ENCODE measurements at regions of chr5 and their contacts with region 1.

Region 1: DNA sequence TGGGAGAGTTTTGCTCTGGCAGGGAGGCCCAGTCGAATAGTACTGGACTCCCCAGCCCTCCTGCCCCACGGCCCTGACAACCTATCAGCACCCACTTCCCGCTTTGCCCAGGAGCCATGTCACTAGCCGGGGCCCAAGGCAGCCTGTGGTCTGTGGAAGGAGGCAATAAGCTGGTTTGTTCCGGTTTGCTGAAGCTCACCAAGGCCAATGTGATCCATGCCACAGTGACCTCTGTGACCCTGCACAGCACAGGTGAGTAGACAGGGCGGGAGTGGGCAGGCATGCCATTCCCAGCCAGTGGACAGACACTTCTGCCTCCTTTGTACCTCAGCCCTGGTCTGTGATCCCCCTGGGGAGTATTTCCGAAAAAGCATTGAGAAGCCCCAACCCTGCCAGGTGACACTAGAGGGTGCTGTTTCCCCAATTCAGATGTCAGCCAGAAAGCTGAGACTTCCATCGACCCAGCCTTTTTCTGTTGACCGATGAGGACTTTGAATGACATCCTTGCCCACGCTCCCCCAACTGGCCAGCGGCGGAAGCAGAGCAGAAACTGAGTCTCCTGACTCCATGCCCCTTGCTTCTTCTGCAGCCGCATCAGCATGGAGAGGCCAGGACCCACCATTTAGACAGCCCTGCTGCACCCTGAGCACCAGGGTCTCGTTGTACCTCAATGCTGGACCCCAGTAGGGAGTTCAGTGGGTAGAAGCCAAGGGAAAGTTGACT is 9.6 kb downstream of the PCYOX1L start:
- DNase-seq: no peak
- ATAC-seq: peak; percentile 41 to 49
- H3K4me3 ChIP-seq: no peak overlapping the region
- H3K27ac ChIP-seq: no peak overlapping the region
- H3K4me1 ChIP-seq: peaks cover 5 to 8% of the 10 kb centered on the region in 2 donors
- H3K27me3 ChIP-seq: no peaks in the 10 kb centered on the region
- CTCF ChIP-seq: peak in 4 of 5 experiments; percentile 25 to 75 (median 64)
- POLR2A ChIP-seq: no peak

Region 2: GRCh38 chr5:149317281-149318048 is 49.9 kb before region 1 on chr5:
- in situ Hi-C with region 1: loop called in 1 of 4 experiments (anchors 10 kb)
- intact Hi-C with region 1: loop called (anchors 5 kb)
- DNase-seq: no peak
- ATAC-seq: no peak
- H3K4me3 ChIP-seq: no peak overlapping the region
- H3K27ac ChIP-seq: peak overlapping the region in 2 of 4 donors; percentile 26 to 40
- H3K4me1 ChIP-seq: peaks cover 34 to 35% of the 10 kb centered on the region in 2 donors
- H3K27me3 ChIP-seq: no peaks in the 10 kb centered on the region
- CTCF ChIP-seq: peak in 4 of 5 experiments; percentile 33 to 58 (median 41)
- POLR2A ChIP-seq: no peak